Testis (tissue), 5 donors: ENCODE measurements at regions of chr9 and their contacts with region 1.

Region 1: GRCh38 chr9:23557689-23558088 is 268.4 kb downstream of the ELAVL2 start:
- DNase-seq: no peak
- H3K4me3 ChIP-seq: no peak overlapping the region
- H3K27ac ChIP-seq: no peak overlapping the region
- H3K4me1 ChIP-seq: no peaks in the 10 kb centered on the region
- H3K27me3 ChIP-seq: no peaks in the 10 kb centered on the region
- CTCF ChIP-seq: no peak
- POLR2A ChIP-seq: no peak

Region 2: DNA sequence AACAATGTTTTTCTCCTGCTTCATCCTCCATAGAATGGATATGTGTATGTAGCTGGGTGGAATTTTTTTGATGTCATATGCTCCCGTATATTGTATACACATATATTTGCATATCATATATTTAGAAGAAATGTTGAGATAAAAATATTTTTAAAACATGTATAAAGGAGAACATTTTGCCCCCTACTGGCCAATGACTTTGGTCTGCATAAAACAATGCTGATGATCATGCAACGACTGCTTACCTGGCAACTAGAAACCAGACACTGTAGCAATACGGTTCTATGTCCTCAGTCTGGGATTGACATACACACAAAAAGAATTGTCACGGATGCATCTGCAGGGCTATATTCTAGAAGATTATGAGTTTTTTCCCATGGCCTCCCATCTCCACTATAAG is 235.3 kb before region 1 on chr9:
- intact Hi-C with region 1: no loop called
- DNase-seq: no peak
- H3K4me3 ChIP-seq: no peak overlapping the region
- H3K27ac ChIP-seq: no peak overlapping the region
- H3K4me1 ChIP-seq: no peaks in the 10 kb centered on the region
- H3K27me3 ChIP-seq: no peaks in the 10 kb centered on the region
- CTCF ChIP-seq: peak in 1 of 3 experiments; percentile 49
- POLR2A ChIP-seq: no peak

Region 3: GRCh38 chr9:23469187-23469586 is 88.5 kb before region 1 on chr9:
- intact Hi-C with region 1: no loop called
- DNase-seq: no peak
- H3K4me3 ChIP-seq: peak overlapping the region in 1 of 2 donors; percentile 13
- H3K27ac ChIP-seq: no peak overlapping the region
- H3K4me1 ChIP-seq: no peaks in the 10 kb centered on the region
- H3K27me3 ChIP-seq: no peaks in the 10 kb centered on the region
- CTCF ChIP-seq: no peak
- POLR2A ChIP-seq: no peak

Region 4: GRCh38 chr9:23502004-23502403 is 55.7 kb before region 1 on chr9:
- intact Hi-C with region 1: no loop called
- DNase-seq: no peak
- H3K4me3 ChIP-seq: no peak overlapping the region
- H3K27ac ChIP-seq: no peak overlapping the region
- H3K4me1 ChIP-seq: no peaks in the 10 kb centered on the region
- H3K27me3 ChIP-seq: no peaks in the 10 kb centered on the region
- CTCF ChIP-seq: no peak
- POLR2A ChIP-seq: no peak

Region 5: DNA sequence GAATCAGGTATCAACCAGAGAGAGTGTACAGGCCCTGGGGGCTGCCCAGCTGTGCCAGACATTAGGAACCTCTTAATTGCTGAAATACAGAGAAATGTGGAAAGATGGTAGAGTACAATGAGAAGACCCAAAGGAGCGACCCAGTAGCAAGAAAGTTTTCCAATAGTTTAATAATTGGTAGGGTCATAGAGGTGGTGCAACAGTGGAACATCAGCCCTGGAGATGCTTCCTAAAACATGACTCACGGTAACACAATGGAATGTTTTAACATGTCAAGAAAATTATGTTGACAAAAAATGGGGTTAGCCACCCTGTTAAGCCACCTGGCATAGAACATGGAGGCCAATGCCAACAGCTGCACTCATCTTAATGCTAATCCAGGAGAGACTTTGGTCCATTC is 15.7 kb before region 1 on chr9:
- intact Hi-C with region 1: loop called (anchors 2 kb)
- DNase-seq: no peak
- H3K4me3 ChIP-seq: no peak overlapping the region
- H3K27ac ChIP-seq: no peak overlapping the region
- H3K4me1 ChIP-seq: no peaks in the 10 kb centered on the region
- H3K27me3 ChIP-seq: no peaks in the 10 kb centered on the region
- CTCF ChIP-seq: no peak
- POLR2A ChIP-seq: no peak

Region 6: GRCh38 chr9:23638837-23639426 is 81.2 kb after region 1 on chr9:
- intact Hi-C with region 1: no loop called
- DNase-seq: no peak
- H3K4me3 ChIP-seq: no peak overlapping the region
- H3K27ac ChIP-seq: no peak overlapping the region
- H3K4me1 ChIP-seq: no peaks in the 10 kb centered on the region
- H3K27me3 ChIP-seq: no peaks in the 10 kb centered on the region
- CTCF ChIP-seq: no peak
- POLR2A ChIP-seq: no peak